Activated CD8-positive, alpha-beta memory T cell treated with anti-CD3 and anti-CD28 coated beads, Interleukin-2, amount 10 ng/mL, durations not matched to agents 7 days and 5 days (primary cell): ENCODE measurements at regions of chr9 and their contacts with region 1.

Region 1: DNA sequence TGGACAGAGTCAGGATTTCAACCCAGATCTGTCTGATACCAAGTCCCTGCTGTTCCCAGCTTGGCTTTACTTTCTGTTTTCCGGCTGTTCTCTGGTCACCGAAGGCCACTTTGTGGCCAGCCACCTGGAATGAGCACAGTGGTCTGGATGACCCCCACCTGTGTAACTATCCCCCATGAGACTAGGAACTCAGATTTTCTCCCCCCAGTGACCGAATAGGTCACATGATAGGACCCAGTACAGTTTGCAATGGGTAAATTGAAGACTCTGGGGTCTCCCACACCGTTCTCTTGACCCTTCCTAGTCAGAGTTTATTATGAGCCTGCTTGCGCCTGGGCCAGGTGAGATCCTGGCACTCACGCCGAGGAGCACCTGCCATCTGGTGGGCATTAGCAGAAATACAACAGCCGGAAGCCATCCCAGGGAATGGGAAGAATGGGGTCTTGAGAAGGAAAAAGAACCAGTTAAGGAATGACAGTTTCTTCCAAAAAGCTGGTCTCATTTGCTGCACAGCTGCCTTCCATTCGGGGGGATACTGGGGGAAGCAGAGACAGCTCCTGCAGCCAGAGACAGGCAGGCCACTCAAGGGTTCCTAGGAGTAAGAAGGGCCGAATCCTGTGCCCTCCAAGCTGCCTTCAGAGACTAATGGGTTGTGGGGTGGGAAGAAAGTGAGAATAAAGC is 7.1 kb downstream of the PHYHD1 start:
- DNase-seq: peak; percentile 61
- ATAC-seq: peak; percentile 77
- H3K4me3 Mint-ChIP-seq: no peak overlapping the region
- H3K27ac Mint-ChIP-seq: no peak overlapping the region
- H3K4me1 Mint-ChIP-seq: peaks cover 12% of the 10 kb centered on the region
- H3K27me3 Mint-ChIP-seq: no peaks in the 10 kb centered on the region

Region 2: DNA sequence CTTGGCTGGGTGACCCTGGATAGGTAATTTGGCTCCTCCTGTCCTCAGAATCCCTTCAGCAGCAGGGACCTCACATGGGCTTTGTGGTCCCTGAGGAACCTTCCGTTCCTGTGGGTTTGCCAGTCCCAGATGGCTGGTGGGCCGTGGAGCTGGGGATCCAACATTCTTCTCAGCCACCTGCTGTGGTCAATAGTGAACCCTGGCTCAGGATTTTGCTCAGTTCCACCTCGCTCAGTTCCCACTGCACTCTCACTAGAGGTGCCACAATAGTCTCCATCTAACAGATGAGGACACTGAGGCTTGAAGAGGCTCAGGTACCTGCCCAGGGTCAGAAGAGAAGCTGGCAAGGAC is 81.2 kb before region 1 on chr9:
- CTCF ChIA-PET with region 1: interaction called, 25 read pairs
- DNase-seq: no peak
- ATAC-seq: no peak
- H3K4me3 Mint-ChIP-seq: no peak overlapping the region
- H3K27ac Mint-ChIP-seq: no peak overlapping the region
- H3K4me1 Mint-ChIP-seq: no peaks in the 10 kb centered on the region
- H3K27me3 Mint-ChIP-seq: no peaks in the 10 kb centered on the region

Region 3: GRCh38 chr9:128863647-128864046 is 64.2 kb before region 1 on chr9:
- CTCF ChIA-PET with region 1: interaction called, 162 read pairs
- DNase-seq: peak; percentile 89
- ATAC-seq: peak; percentile 93
- H3K4me3 Mint-ChIP-seq: no peak overlapping the region
- H3K27ac Mint-ChIP-seq: no peak overlapping the region
- H3K4me1 Mint-ChIP-seq: peaks cover 6% of the 10 kb centered on the region
- H3K27me3 Mint-ChIP-seq: no peaks in the 10 kb centered on the region

Region 4: DNA sequence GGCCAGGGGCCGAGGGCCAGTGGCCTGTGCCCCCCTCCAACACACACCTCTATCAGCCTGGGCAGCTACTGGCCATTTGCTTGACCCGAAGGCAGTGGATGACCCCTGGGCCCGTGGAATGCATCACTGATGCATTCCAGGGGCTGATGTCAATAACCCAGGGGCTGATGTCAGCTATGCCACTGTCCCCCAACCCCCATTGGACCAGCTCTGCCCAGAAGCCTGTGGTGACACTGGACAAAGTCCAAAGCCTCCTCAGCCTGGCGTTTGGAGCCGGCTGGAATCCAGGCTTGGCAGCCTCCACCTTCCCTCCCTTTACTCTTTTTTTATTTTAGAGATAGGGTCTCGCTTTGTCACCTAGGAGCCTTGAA is 52.1 kb before region 1 on chr9:
- CTCF ChIA-PET with region 1: interaction called, 31 read pairs
- DNase-seq: no peak
- ATAC-seq: no peak
- H3K4me3 Mint-ChIP-seq: no peak overlapping the region
- H3K27ac Mint-ChIP-seq: no peak overlapping the region
- H3K4me1 Mint-ChIP-seq: peaks cover 14% of the 10 kb centered on the region
- H3K27me3 Mint-ChIP-seq: no peaks in the 10 kb centered on the region

Region 5: DNA sequence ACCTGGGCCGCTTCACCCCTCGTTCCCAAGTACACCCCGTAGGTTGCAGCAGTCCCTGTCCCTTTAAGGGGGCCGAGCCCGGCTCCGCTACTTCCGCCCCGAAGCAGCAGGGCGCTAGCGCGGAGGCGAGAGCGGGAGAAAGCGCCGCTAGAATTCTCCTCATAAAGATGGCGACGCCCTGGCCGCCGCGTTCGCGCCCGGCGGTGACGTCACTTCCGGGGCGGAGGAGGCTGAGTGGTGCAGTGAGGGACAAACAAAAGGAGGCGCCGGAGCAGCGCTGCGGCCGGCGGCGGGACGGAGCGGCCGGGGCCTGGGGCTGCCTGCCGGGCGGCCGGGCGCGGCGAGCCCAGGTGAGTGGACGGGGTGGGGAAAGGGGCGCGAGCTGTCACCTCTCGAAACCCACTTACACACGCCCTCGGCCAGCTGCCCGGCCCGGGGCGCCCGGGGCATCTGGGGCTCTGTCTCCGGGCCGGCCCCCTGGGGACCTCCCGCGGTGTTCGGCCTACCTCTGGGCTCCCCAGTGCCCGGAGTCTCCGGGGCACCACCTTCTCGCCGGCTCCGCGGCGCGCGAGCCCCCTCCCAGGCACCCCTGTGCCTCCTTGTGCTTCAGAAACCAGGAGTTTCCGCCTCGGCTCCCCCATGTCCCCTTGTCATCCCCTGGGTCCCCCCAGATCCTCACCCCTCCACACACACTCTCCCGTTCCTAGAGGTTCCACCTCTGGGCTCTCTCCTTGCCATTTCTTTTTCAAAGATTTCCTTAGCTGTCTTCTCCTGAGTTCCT is 45.8 kb before region 1 on chr9 and contains the starts of genes KYAT1 and LRRC8A:
- CTCF ChIA-PET with region 1: interaction called, 31 read pairs
- DNase-seq: peak; percentile 99
- ATAC-seq: peak; percentile 96
- H3K4me3 Mint-ChIP-seq: peak within 1 kb of the TSS; percentile 90
- H3K27ac Mint-ChIP-seq: peak within 1 kb of the TSS; percentile 89
- H3K4me1 Mint-ChIP-seq: peaks cover 48% of the 10 kb centered on the region
- H3K27me3 Mint-ChIP-seq: no peaks in the 10 kb centered on the region
- total RNA-seq, gene KYAT1: 12.7 to 20.6 TPM
- total RNA-seq, gene LRRC8A: 25.6 to 26.7 TPM